ENCODE measurements at regions of chr20 and their contacts with region 1.

Region 1: GRCh38 chr20:49245921-49246740 is 26.9 kb downstream of the DDX27 start:
- DNase-seq: peak in 3 of 7 donors; percentile 9 to 42 (median 36)
- H3K4me3 ChIP-seq: no peak overlapping the region
- H3K27ac ChIP-seq: peak overlapping the region in 1 of 5 donors; percentile 23
- H3K4me1 ChIP-seq: peaks cover 0 to 11% of the 10 kb centered on the region in 2 donors
- H3K27me3 ChIP-seq: no peaks in the 10 kb centered on the region
- CTCF ChIP-seq: peak; percentile 31 to 60 (median 56)
- POLR2A ChIP-seq: no peak

Region 2: DNA sequence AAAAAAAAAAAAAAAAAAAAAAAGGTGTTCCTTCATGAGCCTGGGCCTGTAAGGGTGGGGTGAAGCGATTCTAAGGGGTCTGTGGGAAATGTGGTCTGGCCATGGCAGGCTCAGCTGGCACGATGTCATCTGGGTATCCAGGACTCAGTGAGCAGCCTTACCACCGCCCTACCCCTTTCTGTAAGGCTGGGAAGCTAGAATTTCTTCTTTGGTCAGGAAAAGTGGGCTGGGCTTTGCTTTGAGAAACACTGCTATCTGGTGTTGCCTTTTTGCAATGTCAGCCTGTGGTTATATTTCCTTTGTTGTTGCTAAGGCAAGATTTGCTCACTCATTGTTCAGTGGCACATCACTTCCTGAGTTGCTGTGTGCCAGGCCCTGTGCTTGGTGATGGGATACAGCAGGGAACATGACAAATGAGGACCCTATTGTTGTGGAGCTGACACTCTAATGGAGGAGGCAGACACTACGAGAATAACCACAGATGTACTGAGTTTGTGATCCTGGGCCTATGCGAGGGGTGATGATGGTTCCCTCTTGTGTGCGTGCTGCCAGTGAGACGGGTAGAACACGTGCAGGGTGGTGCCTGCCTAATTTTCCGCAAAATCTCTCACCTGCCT is 77.6 kb after region 1 on chr20:
- intact Hi-C with region 1: loop called in 1 of 2 experiments (anchors 10 kb)
- DNase-seq: peak in 4 of 7 donors; percentile 28 to 60 (median 37)
- H3K4me3 ChIP-seq: no peak overlapping the region
- H3K27ac ChIP-seq: no peak overlapping the region
- H3K4me1 ChIP-seq: peaks cover 0 to 5% of the 10 kb centered on the region in 2 donors
- H3K27me3 ChIP-seq: peaks cover 11% of the 10 kb centered on the region
- CTCF ChIP-seq: peak in 3 of 6 experiments; percentile 12 to 29 (median 29)
- POLR2A ChIP-seq: no peak

Measured in adrenal gland (tissue), 19 donors.